ENCODE measurements at regions of chr2 and their contacts with region 1.

Region 1: GRCh38 chr2:25078171-25079049 is 36.5 kb downstream of the EFR3B start:
- DNase-seq: peak; percentile 56 to 66
- H3K4me3 ChIP-seq: no peak overlapping the region
- H3K4me3 Mint-ChIP-seq: peak overlapping the region; percentile 67
- H3K27ac Mint-ChIP-seq: peak overlapping the region; percentile 71
- H3K4me1 ChIP-seq: peaks cover 17% of the 10 kb centered on the region
- H3K4me1 Mint-ChIP-seq: peaks cover 18% of the 10 kb centered on the region
- H3K27me3 ChIP-seq: no peaks in the 10 kb centered on the region
- H3K27me3 Mint-ChIP-seq: no peaks in the 10 kb centered on the region
- CTCF ChIP-seq: no peak

Region 2: DNA sequence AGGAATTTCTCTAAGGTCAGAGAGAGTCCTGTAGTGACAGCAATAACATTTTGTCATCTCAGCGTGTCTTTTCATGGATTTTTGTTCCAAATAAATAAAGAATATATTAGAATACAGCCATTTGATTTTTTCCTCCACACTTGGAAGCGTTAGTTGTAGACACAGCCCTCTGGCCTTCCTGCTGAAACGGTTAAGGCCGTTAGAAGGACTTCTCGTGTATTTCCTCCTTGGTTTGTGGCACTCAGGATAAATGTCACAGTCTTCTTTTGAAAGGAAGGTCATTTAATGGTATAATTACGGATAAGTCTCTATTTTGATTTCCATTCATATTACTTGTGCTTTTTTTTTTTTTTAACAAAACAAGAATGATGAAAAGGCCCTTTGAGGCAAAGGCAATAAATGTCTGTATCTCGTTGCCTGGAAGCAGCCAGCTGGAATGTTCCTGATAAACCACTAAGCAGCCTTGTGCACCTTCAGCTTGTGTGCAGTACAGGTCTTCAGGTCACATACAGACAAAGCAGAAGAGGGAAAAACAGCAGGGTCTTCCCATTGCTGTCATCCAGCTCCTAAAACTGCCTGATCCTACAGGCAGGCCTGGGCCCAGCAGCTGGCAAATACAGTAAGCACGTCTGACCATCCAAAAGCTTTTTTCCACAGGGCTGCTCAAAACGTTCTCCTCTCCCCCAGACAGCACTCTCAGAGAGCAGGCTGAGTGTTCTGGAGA is 22.1 kb before region 1 on chr2:
- CTCF ChIA-PET with region 1: no interaction called
- POLR2A ChIA-PET with region 1: no interaction called
- intact Hi-C with region 1: loop called (anchors 2 kb)
- DNase-seq: peak in 1 of 2 experiments; percentile 57
- H3K4me3 ChIP-seq: no peak overlapping the region
- H3K4me3 Mint-ChIP-seq: no peak overlapping the region
- H3K27ac Mint-ChIP-seq: peak overlapping the region; percentile 77
- H3K4me1 ChIP-seq: peaks cover 25% of the 10 kb centered on the region
- H3K4me1 Mint-ChIP-seq: peaks cover 17% of the 10 kb centered on the region
- H3K27me3 ChIP-seq: no peaks in the 10 kb centered on the region
- H3K27me3 Mint-ChIP-seq: no peaks in the 10 kb centered on the region
- CTCF ChIP-seq: no peak

Region 3: GRCh38 chr2:25115902-25116301 is 37.5 kb after region 1 on chr2:
- CTCF ChIA-PET with region 1: interaction called, 3 read pairs
- POLR2A ChIA-PET with region 1: interaction called, 3 read pairs
- intact Hi-C with region 1: loop called (anchors 5 kb)
- DNase-seq: peak; percentile 70 to 75
- H3K4me3 ChIP-seq: no peak overlapping the region
- H3K4me3 Mint-ChIP-seq: peak overlapping the region; percentile 49
- H3K27ac Mint-ChIP-seq: peak overlapping the region; percentile 74
- H3K4me1 ChIP-seq: peaks cover 37% of the 10 kb centered on the region
- H3K4me1 Mint-ChIP-seq: peaks cover 18% of the 10 kb centered on the region
- H3K27me3 ChIP-seq: no peaks in the 10 kb centered on the region
- H3K27me3 Mint-ChIP-seq: no peaks in the 10 kb centered on the region
- CTCF ChIP-seq: no peak

Measured in Caco-2 (cell line).